K562 (cell line): ENCODE measurements at regions of chr11 and their contacts with region 1.

Region 1: GRCh38 chr11:120303004-120303637 is 22.0 kb upstream of the TLCD5 start:
- DNase-seq: peak; percentile 81 to 87 (median 86)
- ATAC-seq: peak; percentile 94
- H3K4me3 ChIP-seq: no peak overlapping the region
- H3K27ac ChIP-seq: no peak overlapping the region
- H3K4me1 ChIP-seq: no peaks in the 10 kb centered on the region; a peak in 2 of 5 replicates
- H3K27me3 ChIP-seq: peaks cover 14 to 53% of the 10 kb centered on the region in 2 experiments; a peak in 4 of 5 replicates
- CTCF ChIP-seq: peak; percentile 97 to 100 (median 99)
- EP300 ChIP-seq: no peak
- POLR2A ChIP-seq: no peak
- RAD21 ChIP-seq: peak; percentile 71 to 91

Region 2: GRCh38 chr11:120172054-120172911 is 130.8 kb before region 1 on chr11:
- CTCF ChIA-PET with region 1: interaction called, 11 read pairs
- POLR2A ChIA-PET with region 1: no interaction called
- in situ Hi-C with region 1: loop called (anchors 5 kb)
- intact Hi-C with region 1: loop called (anchors 1 kb)
- DNase-seq: peak; percentile 61 to 78 (median 72)
- ATAC-seq: peak; percentile 80
- H3K4me3 ChIP-seq: no peak overlapping the region
- H3K27ac ChIP-seq: no peak overlapping the region
- H3K4me1 ChIP-seq: peaks cover 0 to 18% of the 10 kb centered on the region in 2 experiments; a peak in 2 of 5 replicates
- H3K27me3 ChIP-seq: peaks cover 28 to 71% of the 10 kb centered on the region in 2 experiments; a peak in 4 of 5 replicates
- CTCF ChIP-seq: peak; percentile 87 to 89 (median 87)
- EP300 ChIP-seq: no peak
- POLR2A ChIP-seq: no peak
- RAD21 ChIP-seq: peak; percentile 88 to 94

Region 3: GRCh38 chr11:120235024-120235861 is 67.9 kb before region 1 on chr11:
- CTCF ChIA-PET with region 1: interaction called, 43 read pairs
- POLR2A ChIA-PET with region 1: interaction called, 7 read pairs
- in situ Hi-C with region 1: loop called (anchors 5 kb)
- intact Hi-C with region 1: loop called (anchors 1 kb)
- DNase-seq: peak; percentile 81 to 85 (median 82)
- ATAC-seq: peak; percentile 90
- H3K4me3 ChIP-seq: no peak overlapping the region
- H3K27ac ChIP-seq: no peak overlapping the region
- H3K4me1 ChIP-seq: 0 out of 5 replicates have a peak, but pooled peaks cover 0 to 2% of the 10 kb centered on the region in 2 experiments
- H3K27me3 ChIP-seq: peaks cover 8 to 53% of the 10 kb centered on the region in 2 experiments; a peak in 4 of 5 replicates
- CTCF ChIP-seq: peak; percentile 89 to 94 (median 90)
- EP300 ChIP-seq: no peak
- POLR2A ChIP-seq: no peak
- RAD21 ChIP-seq: peak; percentile 83 to 96

Region 4: GRCh38 chr11:120324932-120325810 is 22.1 kb after region 1 on chr11 and contains the start of gene TLCD5:
- CTCF ChIA-PET with region 1: no interaction called
- POLR2A ChIA-PET with region 1: no interaction called
- in situ Hi-C with region 1: no loop called
- intact Hi-C with region 1: no loop called
- DNase-seq: peak; percentile 60 to 71 (median 65)
- ATAC-seq: peak; percentile 93
- H3K4me3 ChIP-seq: peak within 1 kb of the TSS; percentile 65
- H3K27ac ChIP-seq: no peak within 1 kb of the TSS
- H3K4me1 ChIP-seq: peaks cover 9 to 19% of the 10 kb centered on the region in 2 experiments; a peak in 4 of 5 replicates
- H3K27me3 ChIP-seq: peaks cover 29 to 30% of the 10 kb centered on the region in 2 experiments; a peak in 4 of 5 replicates
- CTCF ChIP-seq: peak in 1 of 3 experiments; percentile 39; a peak in 1 of 6 replicates
- EP300 ChIP-seq: no peak
- POLR2A ChIP-seq: no peak
- RAD21 ChIP-seq: no peak
- polyA plus RNA-seq, gene TLCD5: 1.6 to 1.7 TPM

Region 5: DNA sequence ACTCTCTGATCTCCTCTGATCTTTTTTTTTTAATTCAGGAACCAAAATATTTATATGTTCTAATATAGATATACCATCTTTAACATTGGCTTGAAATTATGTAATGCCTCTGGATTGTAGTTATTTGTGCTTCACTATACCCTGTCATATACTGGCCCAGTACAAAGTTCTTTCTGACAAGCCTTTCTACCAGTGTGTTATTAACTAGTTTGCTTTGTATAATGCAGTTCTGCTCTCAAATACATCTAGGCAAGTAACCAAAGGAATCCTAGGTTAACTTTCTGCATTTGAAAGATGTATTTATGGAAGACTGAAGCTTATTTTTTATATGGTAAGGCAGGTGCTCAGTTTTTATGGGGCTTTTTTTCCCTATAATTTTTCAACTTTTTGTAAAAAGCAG is 69.2 kb after region 1 on chr11:
- CTCF ChIA-PET with region 1: no interaction called
- POLR2A ChIA-PET with region 1: no interaction called
- in situ Hi-C with region 1: no loop called
- intact Hi-C with region 1: no loop called
- DNase-seq: no peak
- ATAC-seq: peak; percentile 32; the same call in 2 of the 3 replicates
- H3K4me3 ChIP-seq: no peak overlapping the region
- H3K27ac ChIP-seq: no peak overlapping the region
- H3K4me1 ChIP-seq: peaks cover 0 to 6% of the 10 kb centered on the region in 2 experiments; a peak in 1 of 5 replicates
- H3K27me3 ChIP-seq: no peaks in the 10 kb centered on the region
- CTCF ChIP-seq: no peak
- EP300 ChIP-seq: no peak
- POLR2A ChIP-seq: no peak
- RAD21 ChIP-seq: no peak